Activated naive CD4-positive, alpha-beta T cell treated with anti-CD3 and anti-CD28 coated beads for 36 hours (primary cell): ENCODE measurements at regions of chrX and their contacts with region 1.

Region 1: GRCh38 chrX:136147315-136147901 is at the start of gene FHL1:
- DNase-seq: peak; percentile 54
- H3K4me3 Mint-ChIP-seq: peak within 1 kb of the TSS; percentile 74
- H3K27ac Mint-ChIP-seq: peak within 1 kb of the TSS; percentile 32
- H3K4me1 Mint-ChIP-seq: peaks cover 26% of the 10 kb centered on the region
- H3K27me3 Mint-ChIP-seq: no peaks in the 10 kb centered on the region
- total RNA-seq, gene FHL1: 17.7 to 20.5 TPM

Region 2: GRCh38 chrX:135973548-135974278 is 173.7 kb before region 1 on chrX and contains the start of gene MMGT1:
- CTCF ChIA-PET with region 1: no interaction called
- intact Hi-C with region 1: loop called (anchors 5 kb)
- DNase-seq: peak; percentile 84
- H3K4me3 Mint-ChIP-seq: peak within 1 kb of the TSS; percentile 95
- H3K27ac Mint-ChIP-seq: peak within 1 kb of the TSS; percentile 92
- H3K4me1 Mint-ChIP-seq: peaks cover 23% of the 10 kb centered on the region
- H3K27me3 Mint-ChIP-seq: no peaks in the 10 kb centered on the region
- total RNA-seq, gene MMGT1: 17.0 to 17.1 TPM

Region 3: GRCh38 chrX:135985141-135985972 is 162.1 kb before region 1 on chrX and contains the start of gene SLC9A6:
- CTCF ChIA-PET with region 1: no interaction called
- intact Hi-C with region 1: loop called (anchors 2 kb)
- DNase-seq: peak; percentile 63
- H3K4me3 Mint-ChIP-seq: peak within 1 kb of the TSS; percentile 85
- H3K27ac Mint-ChIP-seq: peak within 1 kb of the TSS; percentile 77
- H3K4me1 Mint-ChIP-seq: peaks cover 50% of the 10 kb centered on the region
- H3K27me3 Mint-ChIP-seq: no peaks in the 10 kb centered on the region
- total RNA-seq, gene SLC9A6: 9.7 to 10.0 TPM

Region 4: DNA sequence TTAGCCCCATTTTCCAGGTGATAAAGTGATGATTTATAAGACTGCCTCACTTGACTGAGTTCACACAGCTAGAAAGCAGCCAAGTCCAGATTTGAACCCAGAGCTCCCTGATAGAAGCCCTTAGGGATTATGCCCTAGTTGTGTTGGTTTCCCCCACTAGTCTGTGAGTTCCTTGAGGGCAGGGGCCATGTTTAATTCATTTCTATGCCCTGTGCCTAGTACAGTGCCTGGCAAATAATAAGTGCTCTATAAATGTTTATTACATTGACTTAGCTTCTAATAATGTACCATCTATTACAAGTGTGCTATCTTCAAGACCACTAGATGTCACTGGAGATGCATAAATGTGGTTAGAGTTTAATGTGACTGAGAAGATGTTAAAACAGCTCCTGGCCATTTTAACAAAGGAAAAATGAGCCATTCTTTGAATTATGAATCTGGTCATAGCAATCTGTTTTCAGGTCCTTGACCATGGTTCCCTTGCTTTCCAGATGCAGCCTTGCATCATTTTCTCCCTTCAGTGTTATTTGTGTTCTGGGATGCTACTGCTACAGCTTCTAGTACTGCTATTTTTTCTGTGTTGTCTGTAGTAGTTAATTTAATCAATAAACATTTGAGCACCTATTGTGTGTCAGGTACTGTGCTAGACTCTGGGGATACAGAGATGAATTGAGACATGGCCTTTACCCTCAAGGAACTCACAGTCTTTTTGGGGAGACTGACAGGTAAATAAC is 119.0 kb before region 1 on chrX:
- CTCF ChIA-PET with region 1: no interaction called
- intact Hi-C with region 1: loop called (anchors 5 kb)
- DNase-seq: no peak
- H3K4me3 Mint-ChIP-seq: no peak overlapping the region
- H3K27ac Mint-ChIP-seq: no peak overlapping the region
- H3K4me1 Mint-ChIP-seq: no peaks in the 10 kb centered on the region
- H3K27me3 Mint-ChIP-seq: no peaks in the 10 kb centered on the region

Region 5: GRCh38 chrX:136065044-136065671 is 82.2 kb before region 1 on chrX:
- CTCF ChIA-PET with region 1: no interaction called
- intact Hi-C with region 1: loop called (anchors 2 kb)
- DNase-seq: peak; percentile 56
- H3K4me3 Mint-ChIP-seq: peak overlapping the region; percentile 0
- H3K27ac Mint-ChIP-seq: no peak overlapping the region
- H3K4me1 Mint-ChIP-seq: peaks cover 26% of the 10 kb centered on the region
- H3K27me3 Mint-ChIP-seq: no peaks in the 10 kb centered on the region

Region 6: GRCh38 chrX:136115126-136115903 is 32.1 kb before region 1 on chrX:
- CTCF ChIA-PET with region 1: no interaction called
- intact Hi-C with region 1: no loop called
- DNase-seq: no peak
- H3K4me3 Mint-ChIP-seq: no peak overlapping the region
- H3K27ac Mint-ChIP-seq: no peak overlapping the region
- H3K4me1 Mint-ChIP-seq: no peaks in the 10 kb centered on the region
- H3K27me3 Mint-ChIP-seq: no peaks in the 10 kb centered on the region

Region 7: DNA sequence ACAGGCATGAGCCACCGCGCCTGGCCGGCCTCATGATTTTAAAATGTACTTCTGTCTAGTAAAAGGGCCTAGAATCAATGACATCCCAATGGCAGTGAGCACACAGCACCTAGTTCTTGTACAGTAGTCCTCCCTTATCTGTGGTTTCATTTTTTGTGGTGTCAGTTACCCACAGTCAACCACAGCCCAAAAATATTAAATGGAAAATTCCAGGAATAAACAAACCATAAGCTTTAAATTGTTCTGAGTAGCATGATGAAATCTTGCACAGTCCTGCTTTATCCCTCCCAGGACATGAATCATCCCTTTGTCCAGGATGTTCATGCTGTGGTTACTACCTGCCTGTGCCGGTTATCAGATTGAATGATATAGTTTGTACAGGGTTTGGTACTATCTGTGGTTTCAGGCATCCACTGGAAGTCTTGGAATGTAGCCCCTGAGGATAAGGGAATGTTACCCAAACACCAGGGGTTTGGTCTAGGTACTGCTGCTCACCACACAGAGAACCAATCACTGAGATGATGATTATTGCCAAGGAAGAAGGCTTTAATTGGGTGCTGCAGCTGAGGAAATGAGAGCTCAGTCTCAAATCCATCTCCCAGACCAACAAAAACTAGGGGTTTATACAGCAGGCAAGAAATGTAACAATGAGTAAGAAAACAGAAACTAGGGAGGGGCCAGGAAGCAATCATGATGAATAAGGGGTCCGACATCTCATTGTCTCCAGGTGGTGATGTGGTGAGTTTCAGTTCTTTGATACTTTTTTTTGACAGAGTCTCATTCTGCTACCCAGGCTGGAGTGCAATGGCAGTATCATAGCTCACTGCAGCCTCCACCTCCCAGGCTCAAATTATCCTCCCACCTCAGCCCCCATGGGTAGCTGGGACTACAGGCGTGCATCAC is 16.2 kb before region 1 on chrX:
- CTCF ChIA-PET with region 1: no interaction called
- intact Hi-C with region 1: loop called (anchors 1 kb)
- DNase-seq: peak; percentile 19
- H3K4me3 Mint-ChIP-seq: no peak overlapping the region
- H3K27ac Mint-ChIP-seq: peak overlapping the region; percentile 77
- H3K4me1 Mint-ChIP-seq: peaks cover 11% of the 10 kb centered on the region
- H3K27me3 Mint-ChIP-seq: no peaks in the 10 kb centered on the region

Region 8: GRCh38 chrX:136304493-136304892 is 157.1 kb after region 1 on chrX:
- CTCF ChIA-PET with region 1: no interaction called
- intact Hi-C with region 1: no loop called
- DNase-seq: no peak
- H3K4me3 Mint-ChIP-seq: no peak overlapping the region
- H3K27ac Mint-ChIP-seq: no peak overlapping the region
- H3K4me1 Mint-ChIP-seq: no peaks in the 10 kb centered on the region
- H3K27me3 Mint-ChIP-seq: no peaks in the 10 kb centered on the region